Cardiac septum (tissue), 1 donor: ENCODE measurements at regions of chr5 and their contacts with region 1.

Region 1: GRCh38 chr5:171913987-171914273 is 92.5 kb downstream of the FBXW11 start:
- DNase-seq: no peak

Region 2: DNA sequence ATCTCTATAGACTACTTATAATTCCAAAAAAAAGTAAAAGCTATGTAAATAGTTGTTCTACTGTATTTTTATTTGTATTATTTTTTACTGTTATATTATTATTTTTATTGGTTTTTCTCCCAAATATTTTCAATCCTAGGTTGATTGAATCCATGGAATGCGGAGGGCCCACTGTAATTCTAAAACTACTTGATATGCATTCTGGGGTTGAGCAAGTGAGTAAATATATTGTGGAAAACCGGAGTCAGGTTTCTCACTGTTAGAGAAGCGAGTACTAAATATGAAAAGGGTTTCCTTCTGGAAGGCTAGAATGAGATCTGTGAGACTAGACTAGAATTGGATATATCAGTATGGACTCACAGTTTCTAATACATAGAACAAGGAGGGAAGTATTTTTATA is 26.0 kb after region 1 on chr5:
- intact Hi-C with region 1: no loop called
- DNase-seq: no peak

Region 3: GRCh38 chr5:172038167-172038566 is 124.2 kb after region 1 on chr5:
- intact Hi-C with region 1: loop called (anchors 2 kb)
- DNase-seq: no peak